OCI-LY7 (cell line): ENCODE measurements at regions of chr10 and their contacts with region 1.

Region 1: GRCh38 chr10:14954001-14954770 is at the start of gene DCLRE1C:
- DNase-seq: peak; percentile 97
- H3K4me3 ChIP-seq: peak within 1 kb of the TSS; percentile 83
- H3K27ac ChIP-seq: peak within 1 kb of the TSS; percentile 96
- H3K4me1 ChIP-seq: peaks cover 57% of the 10 kb centered on the region
- CTCF ChIP-seq: no peak
- total RNA-seq, gene DCLRE1C: 45.3 and 81.3 TPM in 2 replicates

Region 2: GRCh38 chr10:14751014-14751896 is 202.9 kb before region 1 on chr10:
- CTCF ChIA-PET with region 1: no interaction called
- POLR2A ChIA-PET with region 1: interaction called, 3 read pairs
- intact Hi-C with region 1: loop called (anchors 5 kb)
- DNase-seq: peak; percentile 96
- H3K4me3 ChIP-seq: peak overlapping the region; percentile 37
- H3K27ac ChIP-seq: peak overlapping the region; percentile 88
- H3K4me1 ChIP-seq: peaks cover 63% of the 10 kb centered on the region
- CTCF ChIP-seq: no peak

Region 3: GRCh38 chr10:14812271-14812670 is 141.9 kb before region 1 on chr10:
- CTCF ChIA-PET with region 1: no interaction called
- POLR2A ChIA-PET with region 1: no interaction called
- intact Hi-C with region 1: no loop called
- DNase-seq: no peak
- H3K4me3 ChIP-seq: no peak overlapping the region
- H3K27ac ChIP-seq: no peak overlapping the region
- H3K4me1 ChIP-seq: peaks cover 20% of the 10 kb centered on the region
- CTCF ChIP-seq: no peak

Region 4: DNA sequence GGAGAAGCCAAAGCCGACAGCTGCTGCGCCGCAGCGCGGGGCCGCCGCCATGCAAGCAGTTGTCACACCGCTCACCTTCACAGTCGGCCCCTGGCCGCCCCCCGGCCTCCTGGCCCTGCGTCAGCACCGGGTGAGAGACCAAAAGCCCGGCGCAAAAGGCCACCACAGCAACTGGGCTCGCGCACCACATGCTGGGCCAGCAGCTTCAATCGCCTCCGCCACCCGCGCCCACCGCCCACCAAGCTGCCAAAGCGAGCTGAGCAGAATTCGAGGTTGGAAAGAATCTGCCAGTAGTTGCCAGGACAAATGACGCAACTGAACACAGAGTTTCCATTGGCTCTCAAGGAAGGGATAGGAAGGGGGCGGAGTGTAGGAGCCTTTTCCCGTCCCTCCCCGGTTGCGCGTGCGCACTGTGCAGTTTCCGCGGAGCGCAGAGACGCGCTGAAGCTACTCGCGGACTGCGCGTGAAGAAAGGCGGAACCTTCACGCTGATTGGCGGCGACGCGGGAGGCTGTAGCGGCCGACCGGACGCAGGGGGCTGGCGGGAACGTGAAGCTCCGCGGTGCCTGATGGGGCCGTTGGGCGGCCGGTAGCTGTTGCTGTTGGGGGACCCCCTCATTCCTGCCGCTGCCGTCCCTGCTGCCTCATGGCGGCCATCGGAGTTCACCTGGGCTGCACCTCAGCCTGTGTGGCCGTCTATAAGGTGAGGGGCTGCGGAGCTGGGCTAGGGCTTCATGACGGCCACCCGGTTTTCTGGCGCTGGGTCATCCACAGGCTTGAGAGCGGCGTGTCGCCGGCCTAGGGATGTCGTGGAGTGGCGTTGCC is 116.2 kb before region 1 on chr10 and contains the starts of genes CDNF, HSPA14 and MSANTD7:
- CTCF ChIA-PET with region 1: no interaction called
- POLR2A ChIA-PET with region 1: interaction called, 12 read pairs
- intact Hi-C with region 1: loop called (anchors 2 kb)
- DNase-seq: peak; percentile 100
- H3K4me3 ChIP-seq: peak within 1 kb of the TSS; percentile 88
- H3K27ac ChIP-seq: peak within 1 kb of the TSS; percentile 56
- H3K4me1 ChIP-seq: peaks cover 12% of the 10 kb centered on the region
- CTCF ChIP-seq: no peak
- total RNA-seq, gene CDNF: 0.72 and 3.2 TPM in 2 replicates
- total RNA-seq, gene HSPA14: 21.8 and 29.4 TPM in 2 replicates
- total RNA-seq, gene MSANTD7: 22.2 and 26.5 TPM in 2 replicates

Region 5: GRCh38 chr10:15097011-15097812 is 143.0 kb after region 1 on chr10 and contains the start of gene RPP38:
- CTCF ChIA-PET with region 1: no interaction called
- POLR2A ChIA-PET with region 1: no interaction called
- intact Hi-C with region 1: loop called (anchors 5 kb)
- DNase-seq: peak; percentile 95
- H3K4me3 ChIP-seq: peak within 1 kb of the TSS; percentile 89
- H3K27ac ChIP-seq: peak within 1 kb of the TSS; percentile 89
- H3K4me1 ChIP-seq: peaks cover 17% of the 10 kb centered on the region
- CTCF ChIP-seq: no peak
- total RNA-seq, gene RPP38: 13.2 and 15.1 TPM in 2 replicates